PC-9 (cell line): ENCODE measurements at regions of chr1 and their contacts with region 1.

Region 1: DNA sequence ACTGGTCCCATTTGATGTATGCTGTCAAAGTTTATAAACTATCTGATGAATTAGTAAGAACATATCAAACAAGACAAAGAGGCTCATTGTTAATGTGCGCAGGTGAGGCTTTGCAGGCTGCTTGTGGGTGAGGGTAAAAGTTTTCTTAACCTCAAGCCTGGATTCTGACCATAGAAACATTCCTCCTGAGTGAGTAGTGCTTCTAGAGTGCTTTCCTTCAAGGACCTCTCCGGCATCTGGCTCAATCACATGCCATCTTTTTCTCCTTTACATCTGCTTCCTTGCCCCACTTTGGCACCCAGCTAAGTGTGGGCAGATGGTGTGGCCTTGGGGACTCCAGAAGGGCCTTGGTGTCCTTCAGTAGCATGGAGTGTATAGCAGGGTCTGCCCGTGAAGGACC is 104.0 kb downstream of the ROR1 start:
- DNase-seq: peak; percentile 65 to 96
- H3K4me3 ChIP-seq: peak overlapping the region; percentile 1; the same call in 1 of the 2 replicates
- H3K27ac ChIP-seq: peak overlapping the region; percentile 94
- H3K4me1 ChIP-seq: peaks cover 70% of the 10 kb centered on the region
- H3K27me3 ChIP-seq: no peaks in the 10 kb centered on the region
- CTCF ChIP-seq: no peak

Region 2: DNA sequence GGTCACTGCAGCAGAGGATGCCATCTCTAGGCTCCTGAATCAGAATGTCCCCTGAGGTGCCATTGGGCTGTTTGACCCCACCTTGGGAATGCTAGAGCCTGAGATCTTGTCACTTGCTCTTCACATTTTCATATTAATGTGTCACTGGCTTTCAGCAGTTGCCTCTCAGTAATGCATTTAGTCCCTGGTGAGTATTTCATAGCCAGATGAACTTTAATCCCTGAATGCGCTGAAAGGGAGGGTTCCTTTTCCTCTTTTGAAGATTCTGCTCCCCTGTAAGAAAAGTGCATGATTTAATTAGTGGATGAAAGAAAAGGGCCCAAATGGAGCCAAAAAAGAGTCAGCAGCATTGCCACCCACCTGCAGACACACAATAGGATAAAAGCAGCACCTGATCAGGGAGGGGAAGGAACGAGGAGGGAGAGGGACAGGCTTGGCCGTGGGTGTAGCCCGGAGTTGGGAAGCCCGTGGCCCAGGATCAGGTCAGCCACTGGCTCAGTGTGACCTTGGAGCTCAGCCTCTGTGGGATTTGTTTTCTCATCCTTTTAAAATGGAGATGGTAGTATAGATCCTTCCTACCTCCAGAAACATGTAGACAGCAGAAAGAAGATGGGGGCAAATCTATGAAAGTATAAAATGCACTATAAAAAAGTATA is 72.9 kb before region 1 on chr1:
- CTCF ChIA-PET with region 1: no interaction called
- POLR2A ChIA-PET with region 1: no interaction called
- intact Hi-C with region 1: no loop called
- DNase-seq: no peak
- H3K4me3 ChIP-seq: no peak overlapping the region
- H3K27ac ChIP-seq: no peak overlapping the region
- H3K4me1 ChIP-seq: no peaks in the 10 kb centered on the region
- H3K27me3 ChIP-seq: no peaks in the 10 kb centered on the region
- CTCF ChIP-seq: no peak

Region 3: GRCh38 chr1:63833363-63834119 is 44.3 kb before region 1 on chr1:
- CTCF ChIA-PET with region 1: interaction called, 10 read pairs
- POLR2A ChIA-PET with region 1: no interaction called
- intact Hi-C with region 1: no loop called
- DNase-seq: no peak
- H3K4me3 ChIP-seq: no peak overlapping the region
- H3K27ac ChIP-seq: no peak overlapping the region
- H3K4me1 ChIP-seq: peaks cover 40% of the 10 kb centered on the region
- H3K27me3 ChIP-seq: no peaks in the 10 kb centered on the region
- CTCF ChIP-seq: no peak

Region 4: DNA sequence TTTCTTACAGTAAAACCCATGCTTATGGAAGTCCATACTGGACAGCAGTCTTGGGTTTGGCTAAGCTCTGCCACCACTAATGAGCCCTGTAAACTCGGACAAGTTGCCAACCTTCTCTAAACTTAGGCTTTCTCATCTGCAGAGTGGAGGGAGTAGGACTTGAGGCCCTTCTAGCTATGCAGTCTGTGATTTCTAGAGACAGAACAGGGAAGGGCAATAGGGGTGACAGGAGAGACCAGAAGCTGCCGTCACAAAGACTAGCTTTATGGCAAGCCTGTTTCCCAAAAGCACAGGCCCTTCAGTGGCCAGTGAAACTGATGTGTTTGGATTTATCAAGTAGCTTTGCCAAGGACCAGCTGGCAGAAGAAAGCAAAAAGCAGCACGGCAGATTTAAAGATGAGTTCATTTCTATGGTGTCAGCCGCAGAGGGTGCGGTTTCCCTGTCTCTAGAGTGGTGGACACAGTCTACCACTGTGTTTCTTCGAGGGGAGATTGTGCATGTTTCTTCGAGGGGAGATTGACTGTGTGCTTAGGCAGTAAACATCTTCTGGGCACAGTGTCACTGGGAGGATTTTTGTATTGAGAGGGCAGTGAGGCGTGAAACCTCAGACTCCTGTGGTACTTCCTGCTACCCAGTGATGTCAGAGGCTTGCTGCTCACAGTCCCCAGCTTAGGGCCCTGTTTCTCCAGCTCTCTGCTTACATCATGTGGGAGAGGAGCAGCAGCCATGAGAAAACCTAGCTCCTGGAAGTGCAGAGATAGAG is 15.0 kb after region 1 on chr1:
- CTCF ChIA-PET with region 1: interaction called, 3 read pairs
- POLR2A ChIA-PET with region 1: no interaction called
- intact Hi-C with region 1: loop called (anchors 1 kb)
- DNase-seq: peak; percentile 73 to 83
- H3K4me3 ChIP-seq: no peak overlapping the region
- H3K27ac ChIP-seq: peak overlapping the region; percentile 77
- H3K4me1 ChIP-seq: peaks cover 27% of the 10 kb centered on the region
- H3K27me3 ChIP-seq: no peaks in the 10 kb centered on the region
- CTCF ChIP-seq: no peak

Region 5: GRCh38 chr1:64453688-64454087 is 575.9 kb after region 1 on chr1:
- CTCF ChIA-PET with region 1: no interaction called
- POLR2A ChIA-PET with region 1: interaction called, 16 read pairs
- intact Hi-C with region 1: no loop called
- DNase-seq: no peak
- H3K4me3 ChIP-seq: no peak overlapping the region
- H3K27ac ChIP-seq: no peak overlapping the region
- H3K4me1 ChIP-seq: no peaks in the 10 kb centered on the region
- H3K27me3 ChIP-seq: no peaks in the 10 kb centered on the region
- CTCF ChIP-seq: no peak